Astrocyte of the cerebellum (primary cell): ENCODE measurements at regions of chr1 and their contacts with region 1.

Region 1: GRCh38 chr1:74780594-74780993 is 47.6 kb downstream of the TYW3 start:
- DNase-seq: peak; percentile 59
- H3K4me3 ChIP-seq: no peak overlapping the region
- CTCF ChIP-seq: no peak

Region 2: GRCh38 chr1:74699331-74699730 is 81.3 kb before region 1 on chr1:
- in situ Hi-C with region 1: no loop called
- DNase-seq: no peak
- H3K4me3 ChIP-seq: no peak overlapping the region
- CTCF ChIP-seq: no peak

Region 3: DNA sequence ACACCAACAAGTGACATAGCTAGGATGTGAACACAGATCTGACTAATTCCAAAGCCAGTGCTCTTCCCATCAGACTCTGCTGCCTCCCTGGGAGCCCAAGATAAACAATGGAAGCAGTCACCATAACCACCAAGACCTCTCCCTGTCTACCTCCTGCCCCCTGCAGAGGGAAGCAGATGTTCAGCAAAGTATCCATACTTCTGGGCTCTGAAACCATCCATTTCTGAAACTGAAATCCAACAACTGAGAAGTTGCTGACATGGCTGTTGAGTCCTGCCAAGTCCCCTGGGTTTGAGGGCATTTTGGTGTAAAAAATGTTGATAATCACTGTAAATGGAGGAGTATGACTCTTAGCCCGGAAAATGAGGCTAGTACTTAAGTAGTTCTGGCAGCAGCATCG is 54.5 kb after region 1 on chr1:
- in situ Hi-C with region 1: no loop called
- DNase-seq: peak; percentile 85
- H3K4me3 ChIP-seq: no peak overlapping the region
- CTCF ChIP-seq: no peak

Region 4: GRCh38 chr1:75203415-75204277 is 423.1 kb after region 1 on chr1:
- in situ Hi-C with region 1: loop called (anchors 10 kb)
- DNase-seq: peak; percentile 31
- H3K4me3 ChIP-seq: no peak overlapping the region
- CTCF ChIP-seq: peak; percentile 71